CD14-positive monocyte (primary cell): ENCODE measurements at regions of chr5 and their contacts with region 1.

Region 1: DNA sequence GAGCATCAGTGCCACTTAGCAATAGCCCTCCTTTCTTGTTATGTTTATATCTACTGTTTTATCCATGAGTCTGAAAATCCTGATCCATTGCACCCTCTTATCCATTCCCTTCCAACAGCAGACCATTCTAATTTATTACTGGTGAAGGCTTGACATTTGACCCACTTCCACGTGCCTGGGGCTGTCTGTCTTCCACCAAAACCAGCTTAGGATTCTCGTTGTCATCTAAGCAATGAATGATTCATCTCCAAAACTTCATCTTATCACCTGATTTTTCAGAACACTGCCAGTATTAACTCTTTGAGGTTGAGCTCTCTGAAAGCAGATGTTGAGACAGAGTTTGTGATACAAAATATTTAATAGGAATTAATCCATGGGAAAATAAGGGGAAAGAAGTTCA is 277.8 kb upstream of the FBXL7 start:
- DNase-seq: no peak
- H3K4me3 ChIP-seq: no peak overlapping the region
- H3K4me3 Mint-ChIP-seq: no peak overlapping the region
- H3K27ac ChIP-seq: no peak overlapping the region
- H3K27ac Mint-ChIP-seq: no peak overlapping the region
- H3K4me1 ChIP-seq: no peaks in the 10 kb centered on the region
- H3K4me1 Mint-ChIP-seq: no peaks in the 10 kb centered on the region
- H3K27me3 ChIP-seq: no peaks in the 10 kb centered on the region
- H3K27me3 Mint-ChIP-seq: no peaks in the 10 kb centered on the region
- CTCF ChIP-seq: no peak

Region 2: GRCh38 chr5:15191012-15191411 is 31.1 kb before region 1 on chr5:
- intact Hi-C with region 1: no loop called
- DNase-seq: no peak
- H3K4me3 ChIP-seq: no peak overlapping the region
- H3K4me3 Mint-ChIP-seq: no peak overlapping the region
- H3K27ac ChIP-seq: no peak overlapping the region
- H3K27ac Mint-ChIP-seq: no peak overlapping the region
- H3K4me1 ChIP-seq: no peaks in the 10 kb centered on the region
- H3K4me1 Mint-ChIP-seq: no peaks in the 10 kb centered on the region
- H3K27me3 ChIP-seq: no peaks in the 10 kb centered on the region
- H3K27me3 Mint-ChIP-seq: no peaks in the 10 kb centered on the region
- CTCF ChIP-seq: no peak

Region 3: GRCh38 chr5:15233566-15233965 is 11.4 kb after region 1 on chr5:
- intact Hi-C with region 1: loop called in 1 of 2 experiments (anchors 1 kb)
- DNase-seq: no peak
- H3K4me3 ChIP-seq: no peak overlapping the region
- H3K4me3 Mint-ChIP-seq: no peak overlapping the region
- H3K27ac ChIP-seq: no peak overlapping the region
- H3K27ac Mint-ChIP-seq: no peak overlapping the region
- H3K4me1 ChIP-seq: no peaks in the 10 kb centered on the region
- H3K4me1 Mint-ChIP-seq: no peaks in the 10 kb centered on the region
- H3K27me3 ChIP-seq: no peaks in the 10 kb centered on the region
- H3K27me3 Mint-ChIP-seq: no peaks in the 10 kb centered on the region
- CTCF ChIP-seq: no peak

Region 4: DNA sequence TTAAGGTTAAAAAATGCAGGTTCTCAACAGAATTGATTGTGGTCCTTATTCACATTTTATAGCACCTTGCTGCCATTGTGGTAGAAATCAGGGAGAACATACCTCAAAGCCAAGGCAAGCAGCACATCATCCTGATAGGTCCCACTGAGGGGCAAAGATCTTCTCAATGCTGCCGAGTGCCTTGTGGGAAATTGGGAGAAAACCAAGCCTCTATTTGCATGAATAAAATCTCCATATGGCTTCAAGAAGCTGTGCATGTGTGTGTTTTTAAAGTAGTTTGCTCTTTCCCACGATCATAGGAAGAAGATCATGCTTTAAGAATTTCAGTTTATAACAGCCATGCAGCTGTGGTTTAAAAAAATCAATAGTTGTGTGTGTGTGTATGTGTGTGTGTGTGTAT is 60.9 kb after region 1 on chr5:
- intact Hi-C with region 1: no loop called
- DNase-seq: no peak
- H3K4me3 ChIP-seq: no peak overlapping the region
- H3K4me3 Mint-ChIP-seq: no peak overlapping the region
- H3K27ac ChIP-seq: no peak overlapping the region
- H3K27ac Mint-ChIP-seq: no peak overlapping the region
- H3K4me1 ChIP-seq: no peaks in the 10 kb centered on the region
- H3K4me1 Mint-ChIP-seq: no peaks in the 10 kb centered on the region
- H3K27me3 ChIP-seq: no peaks in the 10 kb centered on the region
- H3K27me3 Mint-ChIP-seq: peaks cover 0 to 2% (median 0%) of the 10 kb centered on the region in 3 donors
- CTCF ChIP-seq: no peak